Panc1 (cell line): ENCODE measurements at regions of chr16 and their contacts with region 1.

Region 1: GRCh38 chr16:30445408-30446202 is at the start of gene SEPHS2:
- DNase-seq: peak; percentile 95
- ATAC-seq: peak; percentile 96
- H3K4me3 ChIP-seq: peak within 1 kb of the TSS; percentile 74 to 82
- H3K27ac ChIP-seq: peak within 1 kb of the TSS; percentile 86
- H3K4me1 ChIP-seq: peaks cover 14% of the 10 kb centered on the region
- H3K27me3 ChIP-seq: no peaks in the 10 kb centered on the region
- CTCF ChIP-seq: peak; percentile 29; the same call in 1 of the 2 replicates
- total RNA-seq, gene SEPHS2: 68.5 TPM

Region 2: GRCh38 chr16:29940656-29941055 is 504.9 kb before region 1 on chr16:
- CTCF ChIA-PET with region 1: no interaction called
- POLR2A ChIA-PET with region 1: no interaction called
- in situ Hi-C with region 1: no loop called
- intact Hi-C with region 1: no loop called
- DNase-seq: no peak
- ATAC-seq: no peak
- H3K4me3 ChIP-seq: no peak overlapping the region
- H3K27ac ChIP-seq: peak overlapping the region; percentile 34; the same call in 1 of the 2 replicates
- H3K4me1 ChIP-seq: peaks cover 17% of the 10 kb centered on the region
- H3K27me3 ChIP-seq: no peaks in the 10 kb centered on the region
- CTCF ChIP-seq: no peak

Region 3: GRCh38 chr16:30526823-30527635 is 81.4 kb after region 1 on chr16:
- CTCF ChIA-PET with region 1: interaction called, 4 read pairs
- POLR2A ChIA-PET with region 1: no interaction called
- in situ Hi-C with region 1: no loop called
- intact Hi-C with region 1: loop called (anchors 10 kb)
- DNase-seq: peak; percentile 82
- ATAC-seq: peak; percentile 95
- H3K4me3 ChIP-seq: peak overlapping the region; percentile 69 to 74
- H3K27ac ChIP-seq: peak overlapping the region; percentile 97
- H3K4me1 ChIP-seq: peaks cover 17% of the 10 kb centered on the region
- H3K27me3 ChIP-seq: no peaks in the 10 kb centered on the region
- CTCF ChIP-seq: no peak